ENCODE measurements at regions of chr1 and their contacts with region 1.

Region 1: DNA sequence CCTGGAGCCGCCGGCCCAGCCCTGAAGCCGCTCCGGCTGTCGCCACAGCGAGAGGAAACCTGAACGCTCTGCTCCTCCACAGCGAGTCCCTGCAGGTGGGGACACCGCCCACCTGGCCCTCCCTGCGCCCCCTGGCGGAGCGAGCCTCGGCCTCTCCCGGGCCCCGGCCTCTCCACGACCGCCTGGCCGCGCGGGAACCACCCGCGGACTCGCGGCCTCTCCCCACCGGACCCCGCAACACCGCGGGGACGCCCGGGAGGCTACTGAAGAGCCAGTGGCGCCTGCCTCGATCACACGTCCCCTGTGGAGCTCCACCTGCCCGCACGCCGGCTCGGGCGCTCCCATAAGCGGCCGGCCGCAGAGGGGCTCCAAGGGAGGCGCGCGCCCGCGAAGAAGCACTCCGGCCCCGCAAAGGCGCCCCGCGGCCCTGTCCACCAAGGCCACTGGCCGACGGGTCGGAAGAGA is 109.6 kb downstream of the KCNN3 start:
- DNase-seq: peak; percentile 33 to 52 (median 36)
- H3K4me3 ChIP-seq: peak overlapping the region in 1 of 3 experiments; percentile 65
- H3K4me3 Mint-ChIP-seq: peak overlapping the region in 1 of 2 donors; percentile 65
- H3K27ac ChIP-seq: no peak overlapping the region
- H3K27ac Mint-ChIP-seq: no peak overlapping the region
- H3K4me1 ChIP-seq: peaks cover 8 to 9% of the 10 kb centered on the region in 2 donors
- H3K4me1 Mint-ChIP-seq: peaks cover 7% of the 10 kb centered on the region
- H3K27me3 ChIP-seq: peaks cover 35 to 63% of the 10 kb centered on the region in 2 donors
- H3K27me3 Mint-ChIP-seq: peaks cover 46 to 66% (median 50%) of the 10 kb centered on the region in 3 donors
- CTCF ChIP-seq: peak; percentile 81

Region 2: GRCh38 chr1:154669464-154670282 is 90.8 kb before region 1 on chr1:
- intact Hi-C with region 1: loop called in 1 of 2 experiments (anchors 5 kb)
- DNase-seq: peak; percentile 68 to 73 (median 69)
- H3K4me3 ChIP-seq: no peak overlapping the region
- H3K4me3 Mint-ChIP-seq: no peak overlapping the region
- H3K27ac ChIP-seq: no peak overlapping the region
- H3K27ac Mint-ChIP-seq: no peak overlapping the region
- H3K4me1 ChIP-seq: no peaks in the 10 kb centered on the region
- H3K4me1 Mint-ChIP-seq: no peaks in the 10 kb centered on the region
- H3K27me3 ChIP-seq: no peaks in the 10 kb centered on the region
- H3K27me3 Mint-ChIP-seq: peaks cover 0 to 1% (median 0%) of the 10 kb centered on the region in 3 donors
- CTCF ChIP-seq: peak; percentile 79

Region 3: GRCh38 chr1:154682254-154682653 is 78.2 kb before region 1 on chr1:
- intact Hi-C with region 1: loop called in 1 of 2 experiments (anchors 5 kb)
- DNase-seq: no peak
- H3K4me3 ChIP-seq: no peak overlapping the region
- H3K4me3 Mint-ChIP-seq: no peak overlapping the region
- H3K27ac ChIP-seq: no peak overlapping the region
- H3K27ac Mint-ChIP-seq: peak overlapping the region in 1 of 7 donors; percentile 66
- H3K4me1 ChIP-seq: no peaks in the 10 kb centered on the region
- H3K4me1 Mint-ChIP-seq: no peaks in the 10 kb centered on the region
- H3K27me3 ChIP-seq: no peaks in the 10 kb centered on the region
- H3K27me3 Mint-ChIP-seq: peaks cover 0 to 8% (median 6%) of the 10 kb centered on the region in 3 donors
- CTCF ChIP-seq: no peak

Region 4: DNA sequence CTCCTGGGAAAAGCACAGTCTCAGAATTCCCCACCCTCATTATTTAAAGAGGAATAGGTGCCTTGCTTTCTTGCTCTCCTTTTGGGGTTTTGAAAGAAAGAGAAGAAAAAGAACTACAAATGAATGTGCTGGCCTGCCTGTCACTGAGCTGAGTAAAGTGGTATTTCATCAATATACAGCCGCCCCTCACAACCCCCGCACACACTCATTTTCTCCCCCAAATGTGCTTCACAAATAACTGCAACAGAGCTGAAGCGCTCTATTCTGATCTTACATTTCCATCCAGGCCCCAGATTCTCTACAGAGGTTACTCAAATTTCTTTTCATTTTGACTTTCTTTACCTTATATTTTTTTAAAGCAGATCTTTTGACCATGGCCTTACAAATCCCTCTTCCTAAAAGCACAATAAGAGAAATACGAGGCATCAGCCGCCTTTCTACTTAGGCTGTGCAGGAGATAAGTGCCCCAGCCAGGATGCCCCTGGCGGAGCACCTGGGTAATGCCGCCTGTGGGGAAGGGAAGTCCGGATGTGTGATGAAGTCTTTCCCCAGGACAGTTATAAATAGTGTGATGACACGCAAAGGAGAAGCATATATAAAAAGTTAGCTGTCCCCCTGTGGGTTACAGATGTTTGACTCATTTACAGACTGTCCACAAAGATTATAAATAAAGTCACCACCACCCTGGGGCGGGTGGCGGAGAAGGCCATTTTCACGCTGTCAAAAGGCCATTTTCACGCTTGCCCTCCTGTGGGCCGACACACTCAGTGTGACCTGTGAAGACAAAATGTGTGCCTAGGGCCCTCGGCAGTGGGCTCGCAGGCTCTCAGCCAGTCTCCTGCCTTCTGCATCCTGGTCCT is 103.0 kb after region 1 on chr1:
- intact Hi-C with region 1: no loop called
- DNase-seq: peak in 2 of 3 donors; percentile 13 to 50
- H3K4me3 ChIP-seq: no peak overlapping the region
- H3K4me3 Mint-ChIP-seq: no peak overlapping the region
- H3K27ac ChIP-seq: no peak overlapping the region
- H3K27ac Mint-ChIP-seq: peak overlapping the region in 1 of 7 donors; percentile 47
- H3K4me1 ChIP-seq: peaks cover 16 to 22% of the 10 kb centered on the region in 2 donors
- H3K4me1 Mint-ChIP-seq: peaks cover 23% of the 10 kb centered on the region
- H3K27me3 ChIP-seq: peaks cover 5 to 18% of the 10 kb centered on the region in 2 donors
- H3K27me3 Mint-ChIP-seq: peaks cover 22 to 34% (median 26%) of the 10 kb centered on the region in 3 donors
- CTCF ChIP-seq: peak; percentile 38

Region 5: GRCh38 chr1:154884869-154885701 is 124.6 kb after region 1 on chr1:
- intact Hi-C with region 1: loop called in 1 of 2 experiments (anchors 10 kb)
- DNase-seq: no peak
- H3K4me3 ChIP-seq: no peak overlapping the region
- H3K4me3 Mint-ChIP-seq: no peak overlapping the region
- H3K27ac ChIP-seq: no peak overlapping the region
- H3K27ac Mint-ChIP-seq: no peak overlapping the region
- H3K4me1 ChIP-seq: no peaks in the 10 kb centered on the region
- H3K4me1 Mint-ChIP-seq: no peaks in the 10 kb centered on the region
- H3K27me3 ChIP-seq: peaks cover 0 to 2% of the 10 kb centered on the region in 2 donors
- H3K27me3 Mint-ChIP-seq: peaks cover 3 to 10% (median 4%) of the 10 kb centered on the region in 3 donors
- CTCF ChIP-seq: no peak